CD8-positive, alpha-beta T cell (primary cell): ENCODE measurements at regions of chr3 and their contacts with region 1.

Region 1: GRCh38 chr3:129249276-129250065 is at the start of gene COPG1:
- DNase-seq: peak; percentile 72 to 95 (median 85)
- ATAC-seq: peak; percentile 83
- H3K4me3 ChIP-seq: peak within 1 kb of the TSS; percentile 80 to 87
- H3K4me3 Mint-ChIP-seq: peak within 1 kb of the TSS; percentile 96
- H3K27ac ChIP-seq: peak within 1 kb of the TSS; percentile 83 to 89
- H3K27ac Mint-ChIP-seq: peak within 1 kb of the TSS; percentile 96
- H3K4me1 ChIP-seq: peaks cover 31% of the 10 kb centered on the region
- H3K4me1 Mint-ChIP-seq: peaks cover 49% of the 10 kb centered on the region
- H3K27me3 ChIP-seq: no peaks in the 10 kb centered on the region
- H3K27me3 Mint-ChIP-seq: no peaks in the 10 kb centered on the region
- CTCF ChIP-seq: no peak
- total RNA-seq, gene COPG1: 77.0 to 93.5 TPM

Region 2: DNA sequence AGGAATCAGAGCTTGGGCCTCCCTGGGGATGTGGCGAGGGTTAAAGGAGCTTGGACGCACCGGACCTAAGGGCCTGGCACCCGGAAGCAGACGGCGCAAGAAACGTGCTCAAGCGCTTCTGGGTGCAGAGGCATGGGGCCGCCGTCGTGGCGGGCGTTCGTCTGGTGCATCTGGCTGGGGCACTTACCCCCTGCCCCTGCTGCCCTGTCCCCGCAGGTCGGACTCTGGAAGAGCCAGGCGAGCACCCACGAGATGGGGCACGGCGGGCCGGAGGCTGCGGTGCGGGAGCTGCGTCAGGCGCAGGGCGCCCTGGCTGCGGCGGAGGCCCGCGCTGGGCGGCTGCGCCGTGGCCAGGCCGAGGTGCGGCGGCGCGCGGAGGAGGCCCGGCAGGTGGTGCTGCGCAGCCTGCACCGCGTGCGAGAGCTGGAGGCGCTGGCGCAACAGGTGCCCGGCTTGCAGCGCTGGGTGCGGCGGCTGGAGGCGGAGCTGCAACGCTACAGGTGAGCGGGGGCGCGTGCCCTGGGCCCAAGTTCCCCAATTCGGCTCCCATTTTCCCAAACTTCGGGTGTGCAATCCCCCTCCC is 245.8 kb before region 1 on chr3:
- CTCF ChIA-PET with region 1: interaction called, 20 read pairs
- POLR2A ChIA-PET with region 1: no interaction called
- intact Hi-C with region 1: loop called in 1 of 2 experiments (anchors 1 kb)
- DNase-seq: peak in 8 of 9 experiments; percentile 38 to 82 (median 60)
- ATAC-seq: peak; percentile 92
- H3K4me3 ChIP-seq: peak overlapping the region in 1 of 2 experiments; percentile 12
- H3K4me3 Mint-ChIP-seq: peak overlapping the region; percentile 70
- H3K27ac ChIP-seq: no peak overlapping the region
- H3K27ac Mint-ChIP-seq: no peak overlapping the region
- H3K4me1 ChIP-seq: peaks cover 43% of the 10 kb centered on the region
- H3K4me1 Mint-ChIP-seq: peaks cover 43% of the 10 kb centered on the region
- H3K27me3 ChIP-seq: peaks cover 5 to 23% of the 10 kb centered on the region in 2 experiments
- H3K27me3 Mint-ChIP-seq: peaks cover 21% of the 10 kb centered on the region
- CTCF ChIP-seq: peak; percentile 34

Region 3: GRCh38 chr3:129016356-129016719 is 233.1 kb before region 1 on chr3:
- CTCF ChIA-PET with region 1: interaction called, 11 read pairs
- POLR2A ChIA-PET with region 1: interaction called, 12 read pairs
- intact Hi-C with region 1: no loop called
- DNase-seq: peak in 8 of 9 experiments; percentile 48 to 91 (median 74)
- ATAC-seq: peak; percentile 86
- H3K4me3 ChIP-seq: peak overlapping the region; percentile 40 to 41
- H3K4me3 Mint-ChIP-seq: peak overlapping the region; percentile 73
- H3K27ac ChIP-seq: peak overlapping the region; percentile 49 to 87
- H3K27ac Mint-ChIP-seq: peak overlapping the region; percentile 92
- H3K4me1 ChIP-seq: peaks cover 41% of the 10 kb centered on the region
- H3K4me1 Mint-ChIP-seq: peaks cover 44% of the 10 kb centered on the region
- H3K27me3 ChIP-seq: no peaks in the 10 kb centered on the region
- H3K27me3 Mint-ChIP-seq: no peaks in the 10 kb centered on the region
- CTCF ChIP-seq: peak; percentile 38

Region 4: DNA sequence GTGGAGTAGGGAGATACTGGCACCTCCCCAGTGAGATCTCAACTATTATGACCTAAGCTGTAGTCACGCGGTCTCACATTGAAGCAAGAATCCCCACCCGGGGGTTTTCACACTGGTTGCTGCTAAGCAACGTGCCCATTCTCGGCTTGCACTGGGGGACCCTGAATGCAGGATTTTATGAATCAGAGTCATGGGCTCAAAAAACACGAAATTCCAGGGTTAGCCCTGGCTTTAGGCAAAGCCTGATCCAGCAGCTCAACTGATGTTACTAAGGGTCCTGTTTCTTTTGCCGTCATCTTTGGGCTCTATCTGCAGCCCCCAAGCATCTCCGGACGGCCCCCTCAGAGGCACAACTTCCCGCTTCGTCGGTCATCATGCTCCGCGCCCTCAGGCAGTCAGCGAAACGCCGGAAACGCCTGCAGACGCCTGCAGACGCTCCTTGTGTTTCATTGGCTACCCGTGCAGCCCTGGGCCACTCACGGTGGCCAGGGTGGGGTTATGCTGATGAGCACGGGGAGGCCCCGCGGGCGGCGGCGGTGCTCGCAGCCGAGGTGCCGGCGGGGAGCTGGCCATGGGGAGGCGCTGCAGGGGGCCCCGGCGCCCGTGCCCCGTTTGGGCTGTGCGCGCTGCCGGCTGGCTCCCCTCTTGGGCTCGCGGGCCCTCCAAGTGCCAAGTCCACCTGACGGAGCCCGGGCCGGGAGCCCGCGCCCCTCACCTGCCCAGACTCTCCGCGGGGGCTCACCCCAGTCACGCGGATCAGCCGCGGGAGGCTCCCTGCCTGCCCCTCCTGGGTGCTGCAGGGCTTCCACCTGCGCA is 222.5 kb before region 1 on chr3:
- CTCF ChIA-PET with region 1: interaction called, 7 read pairs
- POLR2A ChIA-PET with region 1: interaction called, 7 read pairs
- intact Hi-C with region 1: loop called (anchors 1 kb)
- DNase-seq: peak; percentile 85 to 98 (median 91)
- ATAC-seq: peak; percentile 98
- H3K4me3 ChIP-seq: peak overlapping the region; percentile 58 to 61
- H3K4me3 Mint-ChIP-seq: peak overlapping the region; percentile 85
- H3K27ac ChIP-seq: peak overlapping the region; percentile 75 to 80
- H3K27ac Mint-ChIP-seq: peak overlapping the region; percentile 99
- H3K4me1 ChIP-seq: peaks cover 22% of the 10 kb centered on the region
- H3K4me1 Mint-ChIP-seq: peaks cover 26% of the 10 kb centered on the region
- H3K27me3 ChIP-seq: no peaks in the 10 kb centered on the region
- H3K27me3 Mint-ChIP-seq: no peaks in the 10 kb centered on the region
- CTCF ChIP-seq: peak; percentile 84

Region 5: GRCh38 chr3:129160891-129161859 is 88.3 kb before region 1 on chr3 and contains the start of gene ISY1:
- CTCF ChIA-PET with region 1: interaction called, 10 read pairs
- POLR2A ChIA-PET with region 1: interaction called, 3 read pairs
- intact Hi-C with region 1: loop called in 1 of 2 experiments (anchors 1 kb)
- DNase-seq: peak; percentile 71 to 97 (median 86)
- ATAC-seq: peak; percentile 80
- H3K4me3 ChIP-seq: peak within 1 kb of the TSS; percentile 84 to 94
- H3K4me3 Mint-ChIP-seq: peak within 1 kb of the TSS; percentile 95
- H3K27ac ChIP-seq: peak within 1 kb of the TSS; percentile 92 to 99
- H3K27ac Mint-ChIP-seq: peak within 1 kb of the TSS; percentile 96
- H3K4me1 ChIP-seq: peaks cover 18% of the 10 kb centered on the region
- H3K4me1 Mint-ChIP-seq: peaks cover 43% of the 10 kb centered on the region
- H3K27me3 ChIP-seq: no peaks in the 10 kb centered on the region
- H3K27me3 Mint-ChIP-seq: no peaks in the 10 kb centered on the region
- CTCF ChIP-seq: peak; percentile 70
- total RNA-seq, gene ISY1: 35.2 to 38.7 TPM

Region 6: DNA sequence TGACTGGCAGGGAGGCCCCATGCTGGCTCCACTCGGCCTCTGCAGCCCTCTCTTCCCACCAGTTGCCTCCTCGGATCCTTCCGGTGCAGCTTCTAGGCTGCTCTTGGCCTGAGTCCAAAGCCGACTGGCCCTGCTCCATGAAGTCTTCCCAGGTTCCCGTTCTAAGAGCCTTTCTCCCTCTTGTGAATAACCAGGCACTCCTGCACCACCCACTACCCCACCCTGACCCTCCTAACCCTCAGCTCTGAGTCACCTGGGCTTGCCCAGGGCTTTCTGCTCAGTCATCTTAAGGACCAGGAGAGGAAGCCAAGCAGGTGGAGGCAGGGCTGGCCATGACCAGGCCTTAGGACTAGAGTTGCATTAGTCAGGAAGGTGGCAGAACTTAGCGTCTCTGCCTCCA is 37.7 kb before region 1 on chr3:
- CTCF ChIA-PET with region 1: no interaction called
- POLR2A ChIA-PET with region 1: no interaction called
- intact Hi-C with region 1: no loop called
- DNase-seq: no peak
- ATAC-seq: no peak
- H3K4me3 ChIP-seq: no peak overlapping the region
- H3K4me3 Mint-ChIP-seq: no peak overlapping the region
- H3K27ac ChIP-seq: no peak overlapping the region
- H3K27ac Mint-ChIP-seq: no peak overlapping the region
- H3K4me1 ChIP-seq: no peaks in the 10 kb centered on the region
- H3K4me1 Mint-ChIP-seq: no peaks in the 10 kb centered on the region
- H3K27me3 ChIP-seq: no peaks in the 10 kb centered on the region
- H3K27me3 Mint-ChIP-seq: peaks cover 4% of the 10 kb centered on the region
- CTCF ChIP-seq: no peak

Region 7: DNA sequence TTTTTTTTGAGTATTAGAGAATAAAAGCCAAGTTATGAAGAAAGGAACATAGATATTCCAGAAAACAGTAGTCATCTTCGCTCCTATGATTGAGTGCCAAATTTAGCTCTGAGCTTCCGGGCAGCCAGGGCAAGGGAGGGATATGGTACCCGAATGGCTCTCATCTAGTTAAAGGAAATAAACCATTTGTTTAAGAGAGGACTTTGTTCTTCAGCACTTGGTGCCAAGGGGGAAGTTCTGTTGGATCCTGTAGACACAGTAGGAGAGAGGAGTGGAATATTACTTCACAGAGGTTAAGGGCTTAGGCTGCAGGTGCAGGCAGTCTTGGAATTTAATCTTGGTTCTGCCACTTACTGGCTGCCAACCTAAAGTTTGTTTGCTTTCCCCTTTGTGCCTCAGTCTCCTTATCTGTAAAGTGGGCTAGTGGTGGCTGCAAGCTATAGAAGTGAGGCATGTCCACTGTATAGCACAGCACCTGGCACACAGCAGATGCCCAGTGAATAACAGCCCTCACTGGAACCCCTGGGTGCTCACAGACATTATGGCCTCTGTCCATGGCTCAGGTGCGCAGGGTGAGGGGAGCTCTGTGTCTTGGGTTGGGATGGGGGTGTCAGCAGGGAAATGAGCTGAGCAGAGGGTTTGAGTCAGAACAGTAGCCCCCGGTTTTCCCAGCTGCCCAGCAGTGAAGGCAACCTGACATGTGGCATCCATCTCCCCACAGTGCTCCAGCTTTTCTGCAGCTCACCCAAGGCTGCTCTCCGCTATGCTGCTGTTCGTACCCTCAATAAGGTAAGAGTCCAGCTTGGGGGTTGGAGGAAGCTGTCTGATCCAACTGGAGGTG is 10.4 kb after region 1 on chr3:
- CTCF ChIA-PET with region 1: interaction called, 15 read pairs
- POLR2A ChIA-PET with region 1: interaction called, 3 read pairs
- intact Hi-C with region 1: no loop called
- DNase-seq: no peak
- ATAC-seq: no peak
- H3K4me3 ChIP-seq: no peak overlapping the region
- H3K4me3 Mint-ChIP-seq: no peak overlapping the region
- H3K27ac ChIP-seq: no peak overlapping the region
- H3K27ac Mint-ChIP-seq: no peak overlapping the region
- H3K4me1 ChIP-seq: no peaks in the 10 kb centered on the region
- H3K4me1 Mint-ChIP-seq: peaks cover 1% of the 10 kb centered on the region
- H3K27me3 ChIP-seq: no peaks in the 10 kb centered on the region
- H3K27me3 Mint-ChIP-seq: no peaks in the 10 kb centered on the region
- CTCF ChIP-seq: no peak

Region 8: DNA sequence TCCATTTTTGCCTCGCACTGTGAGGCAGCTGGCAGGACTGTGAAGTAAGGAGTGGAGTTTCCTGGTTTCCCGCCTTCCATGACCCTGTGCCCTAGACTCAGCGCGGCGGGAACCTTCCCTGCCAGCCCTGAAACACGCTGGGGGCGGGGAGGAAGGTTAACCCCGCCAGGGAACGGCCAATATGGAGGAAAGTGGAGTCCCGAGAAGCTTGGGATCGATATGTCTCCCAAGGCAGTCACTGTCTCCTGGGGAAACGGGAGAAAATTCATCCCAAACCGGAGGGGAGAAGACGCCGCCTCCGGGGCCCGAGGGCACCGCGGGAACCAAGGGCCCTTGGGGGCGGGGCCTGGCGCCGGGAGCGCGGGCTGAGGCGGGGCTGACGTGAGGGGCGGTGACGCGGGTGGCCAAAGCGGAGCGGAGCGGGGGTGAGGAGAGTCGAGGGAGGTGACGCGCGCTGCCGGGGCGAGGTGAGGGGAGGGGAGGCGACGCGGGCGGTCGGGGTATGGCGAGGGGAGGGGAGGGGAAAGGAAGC is 29.0 kb after region 1 on chr3 and contains the start of gene HMCES:
- CTCF ChIA-PET with region 1: interaction called, 4 read pairs
- POLR2A ChIA-PET with region 1: interaction called, 8 read pairs
- intact Hi-C with region 1: loop called (anchors 1 kb)
- DNase-seq: peak; percentile 88 to 98 (median 96)
- ATAC-seq: peak; percentile 94
- H3K4me3 ChIP-seq: peak within 1 kb of the TSS; percentile 59 to 92
- H3K4me3 Mint-ChIP-seq: peak within 1 kb of the TSS; percentile 95
- H3K27ac ChIP-seq: peak within 1 kb of the TSS; percentile 88 to 93
- H3K27ac Mint-ChIP-seq: peak within 1 kb of the TSS; percentile 97
- H3K4me1 ChIP-seq: peaks cover 39% of the 10 kb centered on the region
- H3K4me1 Mint-ChIP-seq: peaks cover 42% of the 10 kb centered on the region
- H3K27me3 ChIP-seq: no peaks in the 10 kb centered on the region
- H3K27me3 Mint-ChIP-seq: no peaks in the 10 kb centered on the region
- CTCF ChIP-seq: no peak
- total RNA-seq, gene HMCES: 69.5 to 78.7 TPM